Gastrocnemius medialis (tissue), 4 donors: ENCODE measurements at regions of chr13 and their contacts with region 1.

Region 1: DNA sequence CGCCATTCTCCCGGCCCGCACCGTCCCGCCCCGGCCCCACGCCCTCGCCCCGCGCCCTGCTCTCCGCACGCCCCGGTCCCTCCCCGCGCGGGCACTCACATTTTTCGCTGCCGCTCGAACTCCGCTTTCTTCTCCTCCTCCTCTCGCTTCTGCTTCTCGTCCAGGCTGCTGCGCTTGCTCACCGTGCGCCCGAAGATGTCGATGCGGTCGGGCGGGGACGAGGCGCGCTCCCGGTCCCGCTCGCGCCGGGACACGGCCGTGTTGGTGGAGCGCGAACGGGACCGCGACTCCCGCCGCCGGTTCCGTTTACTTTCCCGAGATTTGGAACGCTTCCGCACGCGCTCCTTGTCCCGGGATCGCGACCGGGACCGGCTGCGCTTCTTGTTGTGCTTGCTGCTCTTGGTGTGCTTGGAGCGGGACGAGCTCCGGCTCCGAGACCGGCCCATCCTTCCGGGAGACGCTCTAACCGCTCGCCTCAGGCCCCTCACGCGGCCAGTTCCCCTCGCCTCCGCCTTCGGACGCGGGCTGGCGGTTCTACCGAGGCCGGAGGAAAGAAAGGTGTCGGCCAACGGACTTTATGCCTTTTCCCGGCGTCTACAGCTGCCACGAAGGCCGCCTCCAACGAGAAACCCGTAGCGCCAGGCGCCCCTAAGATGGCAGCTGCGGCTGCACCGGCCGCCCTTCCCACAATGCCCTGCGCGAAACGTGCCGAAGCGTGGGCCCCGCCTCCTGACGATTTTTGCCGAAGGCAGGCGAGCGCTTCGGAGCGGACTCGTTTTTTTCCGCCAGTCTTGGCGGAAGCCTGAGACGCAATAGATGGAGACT is at the start of gene ARGLU1:
- DNase-seq: peak; percentile 84 to 86
- ATAC-seq: peak; percentile 88
- H3K4me3 ChIP-seq: peak within 1 kb of the TSS; percentile 92 to 98 (median 97)
- H3K27ac ChIP-seq: peak within 1 kb of the TSS; percentile 92 to 98 (median 94)
- H3K4me1 ChIP-seq: peaks cover 39 to 46% of the 10 kb centered on the region in 2 donors
- H3K27me3 ChIP-seq: no peaks in the 10 kb centered on the region
- CTCF ChIP-seq: no peak
- POLR2A ChIP-seq: peak; percentile 94 to 95
- total RNA-seq, gene ARGLU1: 10.0 to 41.1 (median 12.9) TPM

Region 2: GRCh38 chr13:108218044-108218974 is 1650.6 kb after region 1 on chr13 and contains the start of gene ABHD13:
- in situ Hi-C with region 1: loop called in 1 of 4 experiments (anchors 25 kb)
- intact Hi-C with region 1: no loop called
- DNase-seq: peak; percentile 71 to 86
- ATAC-seq: peak; percentile 86 to 88
- H3K4me3 ChIP-seq: peak within 1 kb of the TSS; percentile 89 to 96 (median 92)
- H3K27ac ChIP-seq: peak within 1 kb of the TSS; percentile 83 to 97 (median 92)
- H3K4me1 ChIP-seq: peaks cover 52 to 55% of the 10 kb centered on the region in 2 donors
- H3K27me3 ChIP-seq: no peaks in the 10 kb centered on the region
- CTCF ChIP-seq: peak in 1 of 5 experiments; percentile 3
- POLR2A ChIP-seq: peak; percentile 68 to 80
- total RNA-seq, gene ABHD13: 4.8 to 15.5 (median 6.9) TPM